Activated B cell treated with CpG ODN at 0.5 μM for 24 hours (primary cell): ENCODE measurements at regions of chr3 and their contacts with region 1.

Region 1: GRCh38 chr3:42036483-42036823 is 54.7 kb upstream of the TRAK1 start:
- DNase-seq: no peak
- ATAC-seq: peak; percentile 51
- H3K4me3 Mint-ChIP-seq: peak overlapping the region; percentile 55
- H3K27ac Mint-ChIP-seq: peak overlapping the region; percentile 86
- H3K4me1 Mint-ChIP-seq: peaks cover 90% of the 10 kb centered on the region
- H3K27me3 Mint-ChIP-seq: no peaks in the 10 kb centered on the region
- CTCF ChIP-seq: no peak

Region 2: DNA sequence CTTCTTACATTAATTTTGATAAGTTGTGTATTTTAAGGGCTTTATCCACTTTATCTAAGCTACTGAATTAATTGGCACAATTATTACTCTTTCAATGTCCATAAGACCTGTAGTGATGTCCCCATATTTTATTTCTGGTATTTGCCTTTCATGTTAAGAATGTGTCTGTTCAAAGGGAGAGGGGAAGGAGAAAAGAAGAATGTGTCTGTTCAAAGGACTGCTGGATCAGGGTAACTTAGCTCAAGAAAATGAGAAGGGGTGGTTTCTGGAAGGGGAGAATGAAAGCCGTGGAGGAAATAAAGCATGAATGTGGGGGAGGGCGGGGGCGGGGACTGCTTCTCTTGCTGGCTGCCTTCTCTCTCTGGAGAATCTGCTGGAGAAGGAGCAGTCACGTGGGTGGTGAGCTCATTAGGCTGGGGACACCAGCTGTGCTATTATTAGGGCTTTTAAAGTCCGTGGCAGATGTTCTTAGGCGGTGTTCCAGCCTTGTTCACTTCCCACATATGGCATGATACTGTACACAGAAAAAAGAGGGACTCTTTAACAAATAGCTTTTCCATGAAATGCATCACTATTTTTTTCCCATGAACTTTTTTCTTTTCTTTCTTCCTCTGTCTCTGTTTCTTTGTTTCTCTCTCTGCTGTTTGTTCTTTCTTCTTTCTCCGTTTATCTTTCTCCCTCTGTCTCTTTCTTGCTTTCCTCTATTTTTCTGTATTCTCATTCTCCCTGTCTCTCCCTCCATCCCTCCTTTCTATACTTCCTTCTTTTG is 10.9 kb before region 1 on chr3:
- CTCF ChIA-PET with region 1: no interaction called
- POLR2A ChIA-PET with region 1: interaction called, 7 read pairs
- intact Hi-C with region 1: loop called (anchors 1 kb)
- DNase-seq: no peak
- ATAC-seq: peak; percentile 42
- H3K4me3 Mint-ChIP-seq: peak overlapping the region; percentile 70
- H3K27ac Mint-ChIP-seq: peak overlapping the region; percentile 82
- H3K4me1 Mint-ChIP-seq: peaks cover 80% of the 10 kb centered on the region
- H3K27me3 Mint-ChIP-seq: no peaks in the 10 kb centered on the region
- CTCF ChIP-seq: no peak

Region 3: GRCh38 chr3:42052484-42053351 is 16.3 kb after region 1 on chr3:
- CTCF ChIA-PET with region 1: no interaction called
- POLR2A ChIA-PET with region 1: interaction called, 13 read pairs
- intact Hi-C with region 1: loop called (anchors 2 kb)
- DNase-seq: no peak
- ATAC-seq: no peak
- H3K4me3 Mint-ChIP-seq: no peak overlapping the region
- H3K27ac Mint-ChIP-seq: peak overlapping the region; percentile 81
- H3K4me1 Mint-ChIP-seq: peaks cover 85% of the 10 kb centered on the region
- H3K27me3 Mint-ChIP-seq: no peaks in the 10 kb centered on the region
- CTCF ChIP-seq: no peak